ENCODE measurements at regions of chr7 and their contacts with region 1.

Region 1: GRCh38 chr7:26117142-26117807 is 34.7 kb upstream of the NFE2L3 start:
- DNase-seq: peak in 2 of 4 experiments; percentile 45 to 60
- ATAC-seq: peak; percentile 92
- H3K4me3 ChIP-seq: no peak overlapping the region
- H3K27ac ChIP-seq: no peak overlapping the region
- H3K4me1 ChIP-seq: no peaks in the 10 kb centered on the region
- H3K27me3 ChIP-seq: peaks cover 20 to 38% of the 10 kb centered on the region in 2 experiments
- CTCF ChIP-seq: peak; percentile 22 to 43 (median 39); a peak in 4 of 6 replicates
- EP300 ChIP-seq: no peak
- POLR2A ChIP-seq: no peak
- RAD21 ChIP-seq: peak; percentile 22 to 65

Region 2: GRCh38 chr7:26038201-26038990 is 78.9 kb before region 1 on chr7:
- CTCF ChIA-PET with region 1: no interaction called
- POLR2A ChIA-PET with region 1: no interaction called
- in situ Hi-C with region 1: no loop called
- intact Hi-C with region 1: no loop called
- DNase-seq: no peak
- ATAC-seq: no peak
- H3K4me3 ChIP-seq: no peak overlapping the region
- H3K27ac ChIP-seq: no peak overlapping the region
- H3K4me1 ChIP-seq: no peaks in the 10 kb centered on the region
- H3K27me3 ChIP-seq: peaks cover 26 to 34% of the 10 kb centered on the region in 2 experiments; a peak in 4 of 5 replicates
- CTCF ChIP-seq: no peak
- EP300 ChIP-seq: no peak
- POLR2A ChIP-seq: no peak
- RAD21 ChIP-seq: no peak

Region 3: DNA sequence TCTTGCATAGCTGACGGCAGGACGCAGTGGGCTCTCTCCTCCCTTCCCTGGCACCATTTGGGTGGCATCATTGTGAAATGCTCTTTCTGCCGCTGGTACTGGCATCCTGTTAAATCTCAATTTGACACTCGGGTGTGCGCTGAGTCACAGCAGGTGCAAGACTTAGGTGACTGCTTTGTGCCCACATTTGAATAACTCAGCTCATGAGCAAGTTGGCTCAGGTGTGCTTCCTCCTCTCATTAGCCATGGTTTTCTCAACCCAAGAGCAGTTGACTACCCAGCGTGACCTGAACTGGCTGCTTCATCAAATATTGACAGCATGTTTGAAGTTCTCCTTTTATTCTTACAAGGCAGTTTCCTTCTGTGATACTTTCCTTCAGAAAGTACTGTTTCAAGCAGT is 10.1 kb after region 1 on chr7:
- CTCF ChIA-PET with region 1: no interaction called
- POLR2A ChIA-PET with region 1: interaction called, 14 read pairs
- in situ Hi-C with region 1: no loop called
- intact Hi-C with region 1: no loop called
- DNase-seq: no peak
- ATAC-seq: no peak
- H3K4me3 ChIP-seq: no peak overlapping the region
- H3K27ac ChIP-seq: no peak overlapping the region
- H3K4me1 ChIP-seq: peaks cover 0 to 3% of the 10 kb centered on the region in 2 experiments; a peak in 1 of 5 replicates
- H3K27me3 ChIP-seq: peaks cover 24 to 46% of the 10 kb centered on the region in 2 experiments; a peak in 4 of 5 replicates
- CTCF ChIP-seq: no peak
- EP300 ChIP-seq: no peak
- POLR2A ChIP-seq: no peak
- RAD21 ChIP-seq: no peak